Posterior vena cava (tissue), 2 donors: ENCODE measurements at regions of chr2 and their contacts with region 1.

Region 1: DNA sequence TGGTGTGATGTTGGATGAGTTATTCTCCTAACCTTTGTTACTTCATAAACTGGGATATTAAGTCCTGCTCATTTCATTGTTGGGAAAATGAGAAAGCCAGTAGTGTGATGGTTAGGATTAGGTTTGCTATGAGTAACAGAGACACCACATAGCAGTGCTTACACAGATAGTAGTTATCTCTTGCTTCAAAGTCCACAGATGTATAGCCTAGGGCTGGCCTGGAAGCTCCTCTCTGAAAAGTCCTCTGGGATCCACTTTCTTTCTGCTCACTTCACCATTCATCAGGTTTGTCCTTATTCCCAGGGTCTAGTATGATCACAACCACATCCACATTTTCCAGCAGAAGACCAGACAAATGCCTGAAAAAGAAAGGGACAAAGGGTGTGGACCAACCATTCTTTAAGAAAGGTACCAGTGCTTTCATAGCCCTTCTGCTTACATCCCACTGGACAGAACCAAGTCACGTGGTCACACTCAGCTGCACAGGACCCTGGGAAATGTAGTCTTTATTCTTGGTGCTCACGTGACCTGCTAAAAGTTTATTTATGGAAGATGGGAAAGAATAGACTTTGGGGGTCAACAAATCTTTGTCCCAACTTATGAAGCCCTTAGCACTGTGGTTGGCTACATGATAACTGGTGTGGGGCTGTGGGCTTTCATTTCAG is 108.9 kb downstream of the INSIG2 start:
- DNase-seq: no peak

Region 2: GRCh38 chr2:117814417-117815264 is 382.5 kb before region 1 on chr2 and contains the start of gene DDX18:
- intact Hi-C with region 1: loop called in 1 of 2 experiments (anchors 10 kb)
- DNase-seq: peak; percentile 99
- total RNA-seq, gene DDX18: 36.4 to 45.8 TPM

Region 3: DNA sequence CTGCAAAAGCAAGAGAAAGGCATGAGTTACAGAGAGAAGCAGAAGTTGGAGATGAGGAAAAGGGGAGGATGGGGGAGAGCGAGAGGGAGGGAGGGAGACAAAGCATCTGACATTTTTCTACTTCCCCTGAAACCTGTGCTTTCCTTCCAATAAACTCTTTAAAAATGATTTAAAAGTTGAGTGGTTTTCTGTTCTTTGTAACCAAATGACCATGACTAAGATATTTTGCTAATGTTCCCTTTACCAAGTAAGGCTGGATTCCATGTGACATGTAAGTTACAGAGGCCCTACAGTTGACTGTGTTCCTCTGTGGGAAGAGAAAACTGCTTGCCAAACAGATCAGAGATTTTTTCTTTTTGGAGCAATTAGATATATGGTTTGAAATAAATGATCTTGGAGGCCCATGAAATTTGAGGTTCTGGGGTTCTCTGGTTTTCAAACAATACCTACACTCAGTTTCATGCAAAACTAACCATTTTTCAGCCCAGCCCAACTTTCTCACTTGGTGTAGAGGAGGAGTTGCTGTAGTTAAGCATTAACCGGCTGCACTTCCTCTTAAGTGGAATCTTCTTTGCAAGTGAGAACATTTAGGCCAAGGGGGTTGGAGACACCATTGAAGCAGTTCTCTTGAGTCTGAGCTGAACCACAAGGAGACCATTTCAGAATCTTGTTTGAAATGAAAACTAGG is 74.4 kb before region 1 on chr2:
- intact Hi-C with region 1: no loop called
- DNase-seq: no peak